SK-N-SH (cell line): ENCODE measurements at regions of chr7 and their contacts with region 1.

Region 1: DNA sequence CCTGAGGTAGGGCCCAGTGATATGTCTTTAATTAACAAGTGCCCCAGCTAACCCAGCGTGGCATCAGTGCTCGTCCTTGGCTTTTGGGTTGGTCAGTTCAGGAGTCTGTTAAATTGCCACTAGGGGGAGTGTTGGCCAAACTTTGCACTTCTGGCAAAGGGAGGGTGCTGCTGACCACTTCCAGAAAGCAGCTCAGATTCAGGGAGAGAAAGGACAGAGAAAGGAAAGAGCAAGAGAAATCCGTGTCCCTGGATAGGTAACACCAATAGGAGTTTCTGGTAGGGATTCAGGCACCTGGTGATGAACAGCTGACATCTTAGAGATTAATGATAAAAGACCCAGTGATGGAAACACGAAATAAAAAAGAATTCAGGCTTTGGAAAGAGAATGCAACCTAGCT is 243.1 kb upstream of the AOAH start:
- DNase-seq: peak; percentile 79
- H3K4me3 ChIP-seq: no peak overlapping the region
- H3K27ac ChIP-seq: peak overlapping the region in 1 of 2 experiments; percentile 99; a peak in 2 of 4 replicates
- H3K4me1 ChIP-seq: peaks cover 0 to 30% of the 10 kb centered on the region in 2 experiments; a peak in 2 of 4 replicates
- H3K27me3 ChIP-seq: no peaks in the 10 kb centered on the region
- CTCF ChIP-seq: peak; percentile 96
- EP300 ChIP-seq: peak in 1 of 2 experiments; percentile 25; a peak in 1 of 4 replicates
- RAD21 ChIP-seq: peak; percentile 95

Region 2: DNA sequence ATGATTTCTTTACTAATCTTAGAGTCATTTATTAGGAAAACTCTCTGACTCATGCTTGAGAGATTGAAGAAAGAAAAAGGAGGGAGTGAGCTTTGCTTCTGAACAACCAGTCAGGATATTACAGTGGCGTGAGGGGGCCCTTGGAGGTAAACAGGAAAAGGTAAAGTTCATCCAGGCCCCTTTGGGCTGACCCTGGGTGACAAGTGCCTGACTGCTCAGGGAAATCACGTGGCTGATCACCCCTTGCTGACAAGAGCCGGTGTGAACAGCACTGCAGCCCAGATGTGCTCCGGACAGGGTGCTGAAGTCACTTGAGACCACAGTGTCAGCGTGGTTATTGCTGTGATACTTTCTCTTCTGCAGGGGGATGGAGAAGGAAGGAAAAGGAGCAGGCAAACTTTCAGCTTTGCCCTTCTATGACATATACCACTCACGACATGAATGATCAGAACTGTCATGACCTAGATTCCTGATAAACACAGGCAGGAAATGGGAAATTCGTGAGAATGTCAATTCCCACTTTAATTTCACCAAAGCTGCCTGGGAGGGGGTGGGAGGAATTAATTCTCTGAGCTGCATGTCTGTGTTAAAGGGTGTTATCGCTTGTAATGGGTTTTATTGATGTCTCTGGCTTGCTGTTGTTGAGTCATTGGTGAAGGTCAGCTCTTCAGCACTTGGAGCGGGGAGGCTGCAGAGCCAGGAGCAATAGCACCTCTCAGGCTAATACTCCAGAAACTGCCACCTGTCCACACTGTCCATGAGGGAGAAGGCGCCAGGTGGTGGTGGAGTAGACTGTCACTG is 103.3 kb before region 1 on chr7:
- CTCF ChIA-PET with region 1: interaction called, 11 read pairs
- POLR2A ChIA-PET with region 1: no interaction called
- DNase-seq: peak; percentile 40
- H3K4me3 ChIP-seq: no peak overlapping the region; a peak in 1 of 4 replicates
- H3K27ac ChIP-seq: peak overlapping the region in 1 of 2 experiments; percentile 95; a peak in 2 of 4 replicates
- H3K4me1 ChIP-seq: peaks cover 0 to 21% of the 10 kb centered on the region in 2 experiments; a peak in 2 of 4 replicates
- H3K27me3 ChIP-seq: no peaks in the 10 kb centered on the region
- CTCF ChIP-seq: no peak
- EP300 ChIP-seq: peak in 1 of 2 experiments; percentile 83; a peak in 1 of 4 replicates
- RAD21 ChIP-seq: peak; percentile 16; the same call in 1 of the 2 replicates

Region 3: GRCh38 chr7:36895192-36895591 is 72.2 kb before region 1 on chr7:
- CTCF ChIA-PET with region 1: interaction called, 32 read pairs
- POLR2A ChIA-PET with region 1: no interaction called
- DNase-seq: no peak
- H3K4me3 ChIP-seq: no peak overlapping the region
- H3K27ac ChIP-seq: peak overlapping the region in 1 of 2 experiments; percentile 40; a peak in 2 of 4 replicates
- H3K4me1 ChIP-seq: peaks cover 0 to 19% of the 10 kb centered on the region in 2 experiments; a peak in 2 of 4 replicates
- H3K27me3 ChIP-seq: no peaks in the 10 kb centered on the region
- CTCF ChIP-seq: no peak
- EP300 ChIP-seq: no peak
- RAD21 ChIP-seq: no peak

Region 4: DNA sequence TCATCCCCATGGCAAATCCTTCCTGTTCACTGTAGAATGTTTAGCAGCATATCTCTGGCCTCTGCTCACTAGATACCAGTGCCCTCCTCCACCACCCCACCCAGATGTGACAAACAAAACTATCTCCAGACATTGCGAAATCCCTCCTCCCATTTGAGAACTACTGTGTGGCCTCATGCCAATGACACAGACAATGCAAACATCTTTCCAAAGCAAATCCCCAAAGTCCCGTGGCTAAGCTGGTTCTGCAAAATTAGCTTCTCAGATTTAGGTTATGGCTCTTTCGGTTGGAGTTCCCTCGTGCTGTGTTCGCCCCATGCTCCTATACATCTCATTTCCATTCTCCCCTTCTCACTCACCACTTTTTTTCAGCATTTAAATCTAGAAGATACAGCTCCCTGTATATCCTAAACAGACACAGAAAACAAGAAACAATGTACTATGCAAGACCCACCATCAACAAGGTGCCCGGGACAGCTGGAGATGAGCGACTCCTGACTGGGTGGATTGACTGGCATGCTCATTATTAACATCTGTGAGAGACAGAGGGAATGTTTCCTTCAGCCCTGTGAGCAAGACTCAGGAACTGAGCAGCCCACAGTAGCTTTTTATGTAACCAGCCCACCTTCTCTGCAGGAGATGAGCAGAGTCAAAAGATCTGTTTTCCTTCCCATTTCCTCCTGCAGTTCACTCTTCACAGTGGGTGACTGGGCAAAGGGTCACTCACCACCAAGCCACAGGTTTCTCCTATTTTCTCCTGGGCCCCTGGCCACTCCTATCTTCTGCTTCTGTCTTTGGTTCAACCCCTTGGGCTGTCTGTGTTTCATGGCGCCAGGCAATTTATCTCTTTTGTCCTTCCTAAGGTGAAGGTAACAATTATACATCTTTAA is 17.4 kb before region 1 on chr7:
- CTCF ChIA-PET with region 1: interaction called, 13 read pairs
- POLR2A ChIA-PET with region 1: no interaction called
- DNase-seq: no peak
- H3K4me3 ChIP-seq: no peak overlapping the region
- H3K27ac ChIP-seq: no peak overlapping the region
- H3K4me1 ChIP-seq: peaks cover 0 to 20% of the 10 kb centered on the region in 2 experiments; a peak in 1 of 4 replicates
- H3K27me3 ChIP-seq: no peaks in the 10 kb centered on the region
- CTCF ChIP-seq: no peak
- EP300 ChIP-seq: no peak
- RAD21 ChIP-seq: no peak

Region 5: GRCh38 chr7:37007268-37007667 is 39.9 kb after region 1 on chr7:
- CTCF ChIA-PET with region 1: interaction called, 13 read pairs
- POLR2A ChIA-PET with region 1: no interaction called
- DNase-seq: no peak
- H3K4me3 ChIP-seq: no peak overlapping the region
- H3K27ac ChIP-seq: peak overlapping the region in 1 of 2 experiments; percentile 30; a peak in 2 of 4 replicates
- H3K4me1 ChIP-seq: peaks cover 0 to 48% of the 10 kb centered on the region in 2 experiments; a peak in 2 of 4 replicates
- H3K27me3 ChIP-seq: peaks cover 31% of the 10 kb centered on the region
- CTCF ChIP-seq: no peak
- EP300 ChIP-seq: no peak
- RAD21 ChIP-seq: no peak